Motor neuron (in vitro differentiated cells): ENCODE measurements at regions of chr12 and their contacts with region 1.

Region 1: GRCh38 chr12:55642669-55643068 is 6.0 kb downstream of the OR10P1 start:
- ATAC-seq: peak in 1 of 8 experiments; percentile 44
- H3K4me3 ChIP-seq: no peak overlapping the region
- H3K27ac ChIP-seq: no peak overlapping the region
- H3K4me1 ChIP-seq: no peaks in the 10 kb centered on the region

Region 2: DNA sequence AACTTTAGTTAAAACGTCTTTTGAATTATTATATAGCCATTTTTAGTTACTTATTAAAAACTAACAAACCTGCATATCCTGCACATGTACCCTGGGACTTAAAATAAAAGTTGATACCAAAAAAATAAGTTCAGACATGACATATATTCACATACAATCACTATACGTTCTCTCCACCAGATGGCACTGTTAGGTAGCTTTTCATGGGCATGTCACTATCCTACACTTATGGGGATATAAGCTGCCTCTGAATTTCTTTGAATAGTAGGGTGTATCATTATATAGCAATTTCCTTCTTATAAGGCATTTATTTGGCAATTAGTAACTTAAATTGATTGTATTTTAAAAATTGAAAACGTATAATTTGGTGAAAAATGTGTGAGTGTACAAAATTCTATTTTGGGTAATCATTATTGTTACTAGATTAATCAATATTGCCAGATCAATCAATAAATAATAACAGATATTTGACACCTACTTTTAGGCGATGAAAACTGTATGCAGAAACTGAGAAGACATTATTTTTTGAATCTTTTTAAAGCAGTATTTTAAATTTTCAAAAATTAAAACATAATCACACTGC is 453.6 kb before region 1 on chr12:
- in situ Hi-C with region 1: loop called in 3 of 9 experiments (anchors 25 kb)
- ATAC-seq: peak; percentile 57 to 92 (median 75)
- H3K4me3 ChIP-seq: no peak overlapping the region
- H3K27ac ChIP-seq: no peak overlapping the region
- H3K4me1 ChIP-seq: no peaks in the 10 kb centered on the region

Region 3: GRCh38 chr12:55582066-55582465 is 60.6 kb before region 1 on chr12:
- in situ Hi-C with region 1: no loop called
- ATAC-seq: no peak
- H3K4me3 ChIP-seq: no peak overlapping the region
- H3K27ac ChIP-seq: no peak overlapping the region
- H3K4me1 ChIP-seq: no peaks in the 10 kb centered on the region